Heart right ventricle (tissue), 16 donors: ENCODE measurements at regions of chr19 and their contacts with region 1.

Region 1: GRCh38 chr19:23015713-23016112 is 12.7 kb upstream of the ZNF728 start:
- DNase-seq: no peak
- ATAC-seq: no peak
- H3K4me3 ChIP-seq: no peak overlapping the region
- H3K27ac ChIP-seq: no peak overlapping the region
- H3K4me1 ChIP-seq: no peaks in the 10 kb centered on the region
- H3K27me3 ChIP-seq: no peaks in the 10 kb centered on the region
- CTCF ChIP-seq: no peak

Region 2: GRCh38 chr19:21691661-21692060 is 1324.1 kb before region 1 on chr19:
- intact Hi-C with region 1: no loop called
- DNase-seq: peak in 1 of 2 donors; percentile 15
- ATAC-seq: peak in 4 of 8 donors; percentile 14 to 70 (median 50)
- H3K4me3 ChIP-seq: no peak overlapping the region
- H3K27ac ChIP-seq: no peak overlapping the region
- H3K4me1 ChIP-seq: no peaks in the 10 kb centered on the region
- H3K27me3 ChIP-seq: peaks cover 0 to 3% (median 0%) of the 10 kb centered on the region in 7 donors
- CTCF ChIP-seq: no peak

Region 3: DNA sequence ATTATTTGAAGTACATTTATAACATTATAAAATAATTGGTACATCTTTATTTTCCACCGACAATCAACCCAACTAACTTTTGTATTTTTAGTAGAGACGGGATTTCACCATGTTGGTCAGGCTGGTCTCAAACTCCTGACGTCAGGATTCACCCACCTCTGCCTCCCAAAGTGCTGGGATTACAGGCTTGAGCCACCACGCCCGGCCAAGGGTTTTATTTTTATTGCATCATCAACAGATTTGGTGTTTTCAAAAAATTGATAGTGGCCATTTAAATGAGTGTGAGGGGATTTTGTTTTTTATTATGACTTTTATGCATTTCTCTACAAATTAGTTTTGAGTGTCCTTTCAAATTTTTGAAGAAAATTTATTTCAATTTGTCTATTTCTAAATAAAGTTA is 909.6 kb after region 1 on chr19:
- intact Hi-C with region 1: loop called in 1 of 10 experiments (anchors 10 kb)
- DNase-seq: no peak
- ATAC-seq: no peak
- H3K4me3 ChIP-seq: no peak overlapping the region
- H3K27ac ChIP-seq: no peak overlapping the region
- H3K4me1 ChIP-seq: no peaks in the 10 kb centered on the region
- H3K27me3 ChIP-seq: no peaks in the 10 kb centered on the region
- CTCF ChIP-seq: no peak